OCI-LY7 (cell line): ENCODE measurements at regions of chr12 and their contacts with region 1.

Region 1: DNA sequence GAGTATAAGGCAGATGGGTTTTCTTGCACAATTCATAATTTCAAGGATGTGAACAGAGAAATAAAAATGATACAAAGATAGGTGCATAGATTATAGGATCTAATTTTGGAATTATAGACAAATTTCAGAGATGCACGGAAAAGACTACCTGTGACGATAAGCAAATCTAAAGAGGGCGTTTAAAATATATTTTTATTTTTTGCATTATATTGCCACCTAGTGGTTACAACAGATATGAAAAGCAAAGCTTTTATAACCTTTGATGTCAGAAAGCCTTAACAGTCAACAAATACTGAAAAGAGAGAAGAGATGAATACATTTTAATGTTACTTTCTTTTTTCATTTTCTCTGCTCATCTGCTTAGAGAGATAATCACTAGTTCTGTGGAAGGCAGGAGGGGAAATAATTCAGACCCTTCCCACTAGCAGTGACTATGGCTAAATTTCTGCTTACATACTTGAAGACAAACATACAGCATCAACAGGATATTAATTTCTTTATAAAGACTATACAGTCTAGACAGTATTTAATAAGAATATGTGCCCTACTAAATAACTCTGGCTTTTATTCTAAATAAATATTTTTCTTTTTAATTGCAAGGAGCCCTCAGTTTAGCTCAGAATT is 46.3 kb downstream of the NTS start:
- DNase-seq: peak; percentile 49
- H3K4me3 ChIP-seq: no peak overlapping the region
- H3K27ac ChIP-seq: no peak overlapping the region
- H3K4me1 ChIP-seq: no peaks in the 10 kb centered on the region
- CTCF ChIP-seq: peak; percentile 85

Region 2: GRCh38 chr12:85949253-85949652 is 28.8 kb after region 1 on chr12:
- CTCF ChIA-PET with region 1: no interaction called
- POLR2A ChIA-PET with region 1: no interaction called
- intact Hi-C with region 1: no loop called
- DNase-seq: no peak
- H3K4me3 ChIP-seq: no peak overlapping the region
- H3K27ac ChIP-seq: no peak overlapping the region
- H3K4me1 ChIP-seq: no peaks in the 10 kb centered on the region
- CTCF ChIP-seq: no peak

Region 3: GRCh38 chr12:86044396-86044795 is 124.0 kb after region 1 on chr12:
- CTCF ChIA-PET with region 1: no interaction called
- POLR2A ChIA-PET with region 1: no interaction called
- intact Hi-C with region 1: no loop called
- DNase-seq: no peak
- H3K4me3 ChIP-seq: no peak overlapping the region
- H3K27ac ChIP-seq: no peak overlapping the region
- H3K4me1 ChIP-seq: no peaks in the 10 kb centered on the region
- CTCF ChIP-seq: no peak

Region 4: GRCh38 chr12:87848248-87848868 is 1927.9 kb after region 1 on chr12:
- CTCF ChIA-PET with region 1: no interaction called
- POLR2A ChIA-PET with region 1: no interaction called
- intact Hi-C with region 1: loop called (anchors 5 kb)
- DNase-seq: peak; percentile 54
- H3K4me3 ChIP-seq: no peak overlapping the region
- H3K27ac ChIP-seq: no peak overlapping the region
- H3K4me1 ChIP-seq: no peaks in the 10 kb centered on the region
- CTCF ChIP-seq: peak; percentile 96